Common myeloid progenitor, CD34-positive (primary cell): ENCODE measurements at regions of chr1 and their contacts with region 1.

Region 1: GRCh38 chr1:234114648-234115307 is 210.3 kb downstream of the SLC35F3 start:
- DNase-seq: peak; percentile 41 to 72 (median 70)
- H3K4me3 ChIP-seq: peak overlapping the region in 1 of 7 experiments; percentile 46
- H3K27ac ChIP-seq: no peak overlapping the region
- H3K4me1 ChIP-seq: peaks cover 0 to 3% (median 0%) of the 10 kb centered on the region in 4 experiments
- H3K27me3 ChIP-seq: peaks cover 0 to 2% (median 0%) of the 10 kb centered on the region in 5 experiments

Region 2: GRCh38 chr1:234125283-234125682 is 10.5 kb after region 1 on chr1:
- CTCF ChIA-PET with region 1: interaction called, 23 read pairs
- POLR2A ChIA-PET with region 1: no interaction called
- DNase-seq: peak; percentile 52 to 67 (median 63)
- H3K4me3 ChIP-seq: no peak overlapping the region
- H3K27ac ChIP-seq: no peak overlapping the region
- H3K4me1 ChIP-seq: no peaks in the 10 kb centered on the region
- H3K27me3 ChIP-seq: peaks cover 0 to 31% (median 7%) of the 10 kb centered on the region in 5 experiments

Region 3: GRCh38 chr1:234212764-234213657 is 98.2 kb after region 1 on chr1:
- CTCF ChIA-PET with region 1: no interaction called
- POLR2A ChIA-PET with region 1: no interaction called
- DNase-seq: peak; percentile 63 to 78 (median 71)
- H3K4me3 ChIP-seq: peak overlapping the region in 2 of 7 experiments; percentile 74 to 85
- H3K27ac ChIP-seq: no peak overlapping the region
- H3K4me1 ChIP-seq: peaks cover 5 to 28% (median 15%) of the 10 kb centered on the region in 4 experiments
- H3K27me3 ChIP-seq: peaks cover 0 to 21% (median 10%) of the 10 kb centered on the region in 5 experiments